ENCODE measurements at regions of chr12 and their contacts with region 1.

Region 1: GRCh38 chr12:54993161-54993835 is 8.7 kb upstream of the TESPA1 start:
- H3K4me3 ChIP-seq: no peak overlapping the region
- H3K27ac ChIP-seq: no peak overlapping the region
- H3K4me1 ChIP-seq: no peaks in the 10 kb centered on the region
- CTCF ChIP-seq: peak; percentile 60

Region 2: DNA sequence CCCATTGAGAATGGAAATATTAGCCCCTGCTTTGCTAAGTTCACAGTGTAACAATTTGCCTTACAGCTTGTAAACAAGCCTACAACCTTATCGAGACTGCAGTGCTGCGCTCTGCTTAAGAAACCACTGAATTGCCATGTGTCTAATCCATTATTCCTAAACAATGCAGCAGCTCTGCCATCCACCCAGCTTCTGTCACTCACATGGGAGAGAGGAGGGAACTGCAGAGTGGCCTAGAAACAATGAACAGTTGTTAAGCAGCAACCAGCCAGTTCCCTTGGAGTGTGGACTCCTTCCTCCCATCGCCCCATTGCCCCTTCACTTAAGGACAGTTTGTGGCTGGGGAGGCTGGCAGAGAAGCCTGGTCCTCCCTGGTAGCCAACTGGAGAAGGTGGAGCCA is 51.6 kb before region 1 on chr12:
- CTCF ChIA-PET with region 1: no interaction called
- POLR2A ChIA-PET with region 1: no interaction called
- H3K4me3 ChIP-seq: no peak overlapping the region
- H3K27ac ChIP-seq: no peak overlapping the region
- H3K4me1 ChIP-seq: no peaks in the 10 kb centered on the region
- CTCF ChIP-seq: no peak

Region 3: GRCh38 chr12:54981796-54982195 is 11.5 kb before region 1 on chr12:
- CTCF ChIA-PET with region 1: interaction called, 16 read pairs
- POLR2A ChIA-PET with region 1: no interaction called
- H3K4me3 ChIP-seq: no peak overlapping the region
- H3K27ac ChIP-seq: no peak overlapping the region
- H3K4me1 ChIP-seq: no peaks in the 10 kb centered on the region
- CTCF ChIP-seq: no peak

Region 4: GRCh38 chr12:55034218-55034617 is 40.9 kb after region 1 on chr12:
- CTCF ChIA-PET with region 1: interaction called, 10 read pairs
- POLR2A ChIA-PET with region 1: no interaction called
- H3K4me3 ChIP-seq: no peak overlapping the region
- H3K27ac ChIP-seq: no peak overlapping the region
- H3K4me1 ChIP-seq: no peaks in the 10 kb centered on the region
- CTCF ChIP-seq: no peak

Region 5: GRCh38 chr12:55057481-55057880 is 64.2 kb after region 1 on chr12:
- CTCF ChIA-PET with region 1: interaction called, 17 read pairs
- POLR2A ChIA-PET with region 1: no interaction called
- H3K4me3 ChIP-seq: no peak overlapping the region
- H3K27ac ChIP-seq: no peak overlapping the region
- H3K4me1 ChIP-seq: no peaks in the 10 kb centered on the region
- CTCF ChIP-seq: no peak

Region 6: DNA sequence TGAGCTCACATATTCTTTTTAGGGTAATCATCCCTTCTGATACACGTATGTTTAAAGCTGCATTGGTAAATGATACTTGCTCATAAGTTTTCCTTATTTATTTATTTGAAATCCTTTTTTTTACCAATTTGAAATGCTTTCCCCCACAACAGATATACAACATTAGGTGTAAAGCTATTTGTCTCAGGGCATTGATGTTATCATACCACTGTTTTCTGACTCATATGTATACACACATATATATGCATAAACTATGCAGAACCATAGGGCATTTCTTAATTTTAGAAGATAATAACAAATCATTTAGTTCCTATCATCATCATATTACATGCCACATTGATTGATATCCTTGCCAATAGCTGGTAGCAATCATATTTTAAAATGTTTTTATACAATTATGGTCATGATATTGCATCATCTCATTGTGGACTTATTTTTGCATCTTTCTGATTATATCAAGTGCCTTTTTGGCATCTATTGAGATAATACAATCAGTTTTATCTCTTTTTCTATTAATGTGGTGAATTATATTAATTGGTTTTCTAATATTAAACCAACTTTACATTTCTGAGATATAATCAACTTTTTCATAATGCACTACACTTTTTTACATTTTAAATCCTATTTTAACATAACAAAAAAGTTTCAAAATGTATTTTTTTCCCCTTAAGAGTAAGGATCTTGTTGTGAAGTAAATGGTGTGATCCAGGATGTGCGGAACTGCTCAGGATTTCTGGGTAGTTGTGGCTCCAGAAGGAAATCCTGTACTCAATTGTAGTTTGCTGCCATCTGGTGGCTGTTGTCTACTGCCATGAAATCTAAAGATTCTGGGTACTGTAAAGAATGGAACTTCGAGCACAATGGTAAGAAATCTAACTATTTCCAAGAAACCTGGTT is 149.6 kb after region 1 on chr12:
- CTCF ChIA-PET with region 1: interaction called, 18 read pairs
- POLR2A ChIA-PET with region 1: no interaction called
- H3K4me3 ChIP-seq: no peak overlapping the region
- H3K27ac ChIP-seq: no peak overlapping the region
- H3K4me1 ChIP-seq: no peaks in the 10 kb centered on the region
- CTCF ChIP-seq: no peak